Dorsolateral prefrontal cortex (tissue), 120 donors: ENCODE measurements at regions of chr12 and their contacts with region 1.

Region 1: GRCh38 chr12:78120866-78121560 is 290.3 kb downstream of the NAV3 start:
- DNase-seq: no peak
- H3K4me3 ChIP-seq: no peak overlapping the region
- H3K27ac ChIP-seq: peak overlapping the region in 8 of 59 donors; percentile 2 to 61 (median 16)
- H3K27me3 ChIP-seq: no peaks in the 10 kb centered on the region
- CTCF ChIP-seq: peak; percentile 12 to 69 (median 54)

Region 2: GRCh38 chr12:77995436-77996167 is 125.4 kb before region 1 on chr12:
- intact Hi-C with region 1: loop called (anchors 2 to 5 kb)
- DNase-seq: no peak
- H3K4me3 ChIP-seq: no peak overlapping the region
- H3K27ac ChIP-seq: peak overlapping the region in 13 of 59 donors; percentile 3 to 83 (median 43)
- H3K27me3 ChIP-seq: no peaks in the 10 kb centered on the region
- CTCF ChIP-seq: peak in 1 of 56 donors; percentile 7

Region 3: DNA sequence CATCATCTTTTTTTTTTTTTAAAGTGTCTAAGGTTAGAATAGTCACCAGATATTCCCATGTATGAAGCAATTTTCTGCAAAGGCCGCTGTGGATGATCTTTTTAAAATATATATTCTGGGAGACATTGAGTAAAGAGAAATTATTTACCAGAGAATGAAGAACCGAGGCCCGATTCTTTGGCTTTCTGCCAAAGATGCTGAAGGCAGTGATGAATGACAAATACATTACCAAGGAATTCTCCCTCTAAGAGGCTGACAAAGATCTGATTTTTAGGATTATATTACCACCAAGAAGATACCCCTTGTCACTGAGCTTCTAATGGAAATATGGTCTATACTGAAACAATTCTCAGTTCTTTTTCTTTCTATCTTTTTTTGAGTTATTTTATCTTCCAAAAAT is 46.5 kb after region 1 on chr12:
- intact Hi-C with region 1: no loop called
- DNase-seq: no peak
- H3K4me3 ChIP-seq: no peak overlapping the region
- H3K27ac ChIP-seq: no peak overlapping the region
- H3K27me3 ChIP-seq: no peaks in the 10 kb centered on the region
- CTCF ChIP-seq: no peak

Region 4: DNA sequence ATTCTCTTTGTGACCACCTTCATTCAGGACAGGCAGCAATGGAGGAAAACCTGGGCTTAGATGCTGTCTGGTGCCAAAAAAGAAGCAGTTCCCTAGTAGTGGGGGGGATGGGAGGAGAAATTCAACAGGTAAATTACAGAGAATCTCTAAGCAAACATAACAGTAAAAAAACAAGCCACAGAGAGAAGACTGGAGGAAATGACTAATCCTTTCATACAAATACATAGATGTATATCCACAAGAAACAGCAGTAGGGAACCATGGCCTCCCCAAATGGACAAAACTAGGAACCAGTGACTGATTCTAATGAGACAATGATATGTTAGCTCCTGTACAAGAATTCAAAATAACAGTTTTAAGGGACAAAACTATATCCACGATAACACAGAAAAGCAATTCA is 222.6 kb after region 1 on chr12:
- intact Hi-C with region 1: no loop called
- DNase-seq: no peak
- H3K4me3 ChIP-seq: no peak overlapping the region
- H3K27ac ChIP-seq: no peak overlapping the region
- H3K27me3 ChIP-seq: no peaks in the 10 kb centered on the region
- CTCF ChIP-seq: no peak